Astrocyte of the cerebellum (primary cell): ENCODE measurements at regions of chr15 and their contacts with region 1.

Region 1: DNA sequence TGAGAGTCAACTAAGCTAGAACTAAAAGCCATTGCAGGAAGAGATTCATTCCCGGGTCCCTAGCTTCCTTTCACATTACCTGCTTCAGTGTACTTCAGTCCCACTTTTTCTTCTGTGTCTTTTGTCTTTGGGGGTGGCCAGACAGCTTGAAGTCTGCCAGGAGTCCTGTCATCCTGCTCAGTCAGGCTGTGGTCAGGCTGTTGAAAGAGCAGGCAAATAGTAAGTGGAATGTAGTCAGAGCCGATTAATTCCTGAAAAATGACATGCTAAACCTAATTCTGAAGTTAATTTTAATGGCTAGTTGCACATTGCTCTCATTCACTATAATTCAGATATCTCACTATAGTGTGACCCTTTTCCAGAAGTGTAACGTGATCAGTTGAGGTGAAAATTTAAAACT is 129.6 kb downstream of the FMN1 start:
- DNase-seq: peak; percentile 56
- H3K4me3 ChIP-seq: no peak overlapping the region
- CTCF ChIP-seq: no peak

Region 2: GRCh38 chr15:32730677-32731654 is 333.9 kb before region 1 on chr15:
- in situ Hi-C with region 1: no loop called
- DNase-seq: no peak
- H3K4me3 ChIP-seq: no peak overlapping the region
- CTCF ChIP-seq: no peak

Region 3: GRCh38 chr15:33029109-33029652 is 35.7 kb before region 1 on chr15:
- in situ Hi-C with region 1: loop called (anchors 5 kb)
- DNase-seq: no peak
- H3K4me3 ChIP-seq: no peak overlapping the region
- CTCF ChIP-seq: no peak